Caco-2 (cell line): ENCODE measurements at regions of chr20 and their contacts with region 1.

Region 1: DNA sequence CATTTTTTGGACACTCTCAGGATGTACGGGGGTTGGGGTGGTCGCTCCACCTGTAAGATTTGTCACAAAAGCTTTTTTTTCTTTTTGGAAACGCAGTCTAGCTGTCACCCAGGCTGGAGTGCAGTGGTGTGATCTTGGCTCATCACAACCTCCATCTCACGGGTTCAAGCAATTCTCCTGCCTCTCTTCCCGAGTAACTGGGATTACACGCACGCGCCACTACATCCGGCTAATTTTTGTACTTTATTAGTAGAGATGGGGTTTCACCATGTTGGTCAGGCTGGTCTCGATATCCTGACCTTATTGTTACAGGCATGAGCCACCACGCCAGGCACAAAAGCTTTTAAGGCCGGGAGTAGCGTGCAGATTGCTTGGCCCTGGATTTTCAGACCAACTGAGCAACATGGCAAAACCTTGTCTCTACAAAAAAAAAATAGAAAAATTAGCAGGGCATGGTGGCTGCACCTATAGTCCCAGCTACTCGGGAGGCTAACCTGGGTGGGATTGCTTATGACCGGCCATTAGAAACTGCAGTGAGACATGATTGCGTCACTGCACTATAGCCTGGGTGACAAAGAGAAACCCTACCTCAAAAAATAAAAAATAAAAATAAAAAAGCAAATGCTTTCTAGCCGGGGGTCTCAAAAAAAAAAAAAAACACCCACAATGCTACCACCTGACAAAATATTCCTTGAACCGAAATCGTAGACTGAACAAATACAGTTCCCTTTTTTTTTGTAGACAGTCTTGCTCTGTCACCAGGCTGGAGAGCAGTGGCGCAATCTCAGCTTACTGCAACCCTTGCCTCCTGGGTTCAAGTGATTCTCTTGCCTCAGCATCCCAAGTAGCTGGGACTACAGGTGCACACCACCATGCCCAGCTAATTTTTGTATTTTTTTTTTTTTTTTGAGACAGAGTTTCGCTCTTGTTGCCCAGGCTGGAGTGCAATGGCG is 15.0 kb downstream of the RBM39 start:
- DNase-seq: peak; percentile 14 to 39
- H3K4me3 ChIP-seq: no peak overlapping the region
- H3K4me3 Mint-ChIP-seq: peak overlapping the region; percentile 33
- H3K27ac Mint-ChIP-seq: peak overlapping the region; percentile 71
- H3K4me1 ChIP-seq: peaks cover 31% of the 10 kb centered on the region
- H3K4me1 Mint-ChIP-seq: peaks cover 38% of the 10 kb centered on the region
- H3K27me3 ChIP-seq: no peaks in the 10 kb centered on the region
- H3K27me3 Mint-ChIP-seq: no peaks in the 10 kb centered on the region
- CTCF ChIP-seq: no peak

Region 2: DNA sequence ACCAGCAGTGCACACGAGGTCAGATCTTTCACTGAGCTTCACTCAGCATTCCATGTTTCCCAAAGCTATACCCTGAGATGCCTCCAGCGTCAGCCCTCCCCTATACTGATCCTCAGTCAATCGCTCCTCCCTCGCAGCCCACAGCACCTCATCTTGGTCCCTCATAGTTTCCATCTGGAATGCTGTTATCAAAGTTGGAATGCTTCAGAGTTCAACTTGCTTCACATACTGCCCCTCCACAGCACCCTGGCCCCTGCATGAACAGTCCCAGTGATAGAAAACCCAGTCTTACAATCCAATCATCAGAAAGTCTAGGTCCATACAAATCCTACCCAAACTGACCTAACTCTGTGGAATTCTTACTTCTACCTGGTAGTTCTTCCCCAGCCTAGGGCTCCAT is 91.4 kb before region 1 on chr20:
- CTCF ChIA-PET with region 1: no interaction called
- POLR2A ChIA-PET with region 1: interaction called, 19 read pairs
- intact Hi-C with region 1: no loop called
- DNase-seq: peak; percentile 60 to 67
- H3K4me3 ChIP-seq: no peak overlapping the region
- H3K4me3 Mint-ChIP-seq: no peak overlapping the region
- H3K27ac Mint-ChIP-seq: peak overlapping the region; percentile 41
- H3K4me1 ChIP-seq: peaks cover 24% of the 10 kb centered on the region
- H3K4me1 Mint-ChIP-seq: peaks cover 47% of the 10 kb centered on the region
- H3K27me3 ChIP-seq: no peaks in the 10 kb centered on the region
- H3K27me3 Mint-ChIP-seq: no peaks in the 10 kb centered on the region
- CTCF ChIP-seq: no peak

Region 3: DNA sequence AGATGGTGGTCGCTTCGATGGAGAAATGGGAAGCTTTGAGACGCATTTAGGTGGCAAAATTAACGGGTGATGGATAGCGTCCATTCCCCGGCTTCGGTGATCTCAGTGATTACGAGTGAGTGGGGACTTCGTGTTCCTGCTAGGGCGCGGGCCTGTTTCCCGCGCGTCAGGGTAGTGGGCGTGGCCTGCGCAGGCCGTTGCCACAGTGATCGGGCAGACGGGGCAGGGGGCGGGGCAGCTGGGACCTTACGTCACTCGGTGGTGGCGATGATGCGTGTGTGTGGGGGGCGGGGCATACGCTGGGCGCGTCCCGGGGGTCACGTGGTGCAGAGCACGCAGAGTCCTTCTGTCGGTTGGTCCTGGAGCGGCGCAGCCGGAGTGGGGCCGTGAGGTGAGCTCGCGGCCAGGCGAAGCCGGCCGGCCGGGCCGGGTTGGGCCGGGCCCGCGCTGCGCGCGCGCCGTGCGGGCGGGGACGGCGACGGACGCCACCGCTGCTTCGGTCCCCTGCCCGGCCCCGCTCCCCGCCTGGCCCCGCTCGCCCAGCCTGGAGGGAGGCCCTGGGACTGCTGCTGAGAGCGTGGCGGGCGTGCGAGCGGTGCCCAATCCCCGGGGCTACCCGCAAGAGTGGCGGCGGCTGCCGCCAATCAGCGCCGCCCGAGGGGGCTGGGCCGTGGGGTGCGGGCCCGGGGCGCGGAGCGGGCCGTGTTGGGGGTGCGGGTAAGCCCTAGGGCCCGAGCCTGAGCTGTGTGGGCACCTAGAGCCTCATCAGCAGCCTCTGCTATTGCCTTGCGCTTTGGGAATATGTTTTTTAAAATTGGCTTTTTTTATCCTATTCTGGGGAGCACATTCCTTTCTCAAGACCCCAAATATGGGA is 44.9 kb after region 1 on chr20 and contains the start of gene PHF20:
- CTCF ChIA-PET with region 1: no interaction called
- POLR2A ChIA-PET with region 1: interaction called, 11 read pairs
- intact Hi-C with region 1: no loop called
- DNase-seq: peak; percentile 100
- H3K4me3 ChIP-seq: peak within 1 kb of the TSS; percentile 73
- H3K4me3 Mint-ChIP-seq: peak within 1 kb of the TSS; percentile 80
- H3K27ac Mint-ChIP-seq: peak within 1 kb of the TSS; percentile 90
- H3K4me1 ChIP-seq: peaks cover 58% of the 10 kb centered on the region
- H3K4me1 Mint-ChIP-seq: peaks cover 54% of the 10 kb centered on the region
- H3K27me3 ChIP-seq: no peaks in the 10 kb centered on the region
- H3K27me3 Mint-ChIP-seq: no peaks in the 10 kb centered on the region
- CTCF ChIP-seq: no peak
- total RNA-seq, gene PHF20: 101 and 109 TPM in 2 replicates

Region 4: DNA sequence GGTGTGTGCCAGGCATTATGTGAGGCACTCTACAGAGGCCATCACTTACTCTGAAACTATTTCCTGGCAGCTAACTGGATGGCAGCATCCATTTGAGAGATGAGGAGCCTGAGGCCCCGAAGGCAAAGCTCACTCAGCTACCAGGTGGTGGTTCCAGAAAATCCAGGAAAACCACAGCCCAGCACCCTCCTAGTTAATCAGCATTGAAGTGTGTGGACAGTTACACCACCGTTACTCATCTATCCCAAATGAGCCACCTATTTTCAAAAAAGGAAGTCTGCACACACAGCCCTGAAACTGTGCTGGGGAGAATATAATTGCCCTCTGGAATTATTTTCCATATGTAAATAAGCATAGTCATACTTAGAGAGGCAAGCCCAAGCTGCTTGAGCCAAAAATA is 308.7 kb after region 1 on chr20:
- CTCF ChIA-PET with region 1: no interaction called
- POLR2A ChIA-PET with region 1: no interaction called
- intact Hi-C with region 1: no loop called
- DNase-seq: no peak
- H3K4me3 ChIP-seq: no peak overlapping the region
- H3K4me3 Mint-ChIP-seq: no peak overlapping the region
- H3K27ac Mint-ChIP-seq: no peak overlapping the region
- H3K4me1 ChIP-seq: 0 out of 2 replicates have a peak, but pooled peaks cover 4% of the 10 kb centered on the region
- H3K4me1 Mint-ChIP-seq: peaks cover 19% of the 10 kb centered on the region
- H3K27me3 ChIP-seq: no peaks in the 10 kb centered on the region
- H3K27me3 Mint-ChIP-seq: no peaks in the 10 kb centered on the region
- CTCF ChIP-seq: no peak

Region 5: DNA sequence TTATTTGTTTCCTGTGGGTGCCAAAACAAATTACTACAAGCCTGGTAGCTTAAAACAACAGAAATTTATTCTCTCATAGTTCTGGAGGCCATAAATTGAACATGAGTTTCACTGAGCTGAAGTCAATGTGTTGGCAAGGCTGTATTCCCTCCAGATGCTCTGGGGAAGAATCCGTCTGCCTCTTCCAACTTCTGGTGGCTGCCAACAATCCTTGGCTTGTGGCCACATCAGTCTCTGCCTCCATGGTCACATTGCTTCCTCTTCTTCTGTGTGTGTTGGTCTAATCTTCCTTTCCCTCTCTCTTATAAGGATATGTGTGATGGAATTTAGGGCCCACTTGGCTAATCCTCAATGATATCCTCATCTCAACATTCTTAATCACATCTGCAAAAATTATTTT is 334.7 kb after region 1 on chr20:
- CTCF ChIA-PET with region 1: no interaction called
- POLR2A ChIA-PET with region 1: no interaction called
- intact Hi-C with region 1: no loop called
- DNase-seq: no peak
- H3K4me3 ChIP-seq: no peak overlapping the region
- H3K4me3 Mint-ChIP-seq: no peak overlapping the region
- H3K27ac Mint-ChIP-seq: no peak overlapping the region
- H3K4me1 ChIP-seq: peaks cover 27% of the 10 kb centered on the region
- H3K4me1 Mint-ChIP-seq: peaks cover 10% of the 10 kb centered on the region
- H3K27me3 ChIP-seq: no peaks in the 10 kb centered on the region
- H3K27me3 Mint-ChIP-seq: no peaks in the 10 kb centered on the region
- CTCF ChIP-seq: no peak